ENCODE measurements at regions of chr14 and their contacts with region 1.

Region 1: GRCh38 chr14:39956372-39956771 is 524.1 kb upstream of the FBXO33 start:
- DNase-seq: no peak
- ATAC-seq: peak; percentile 50
- H3K4me3 ChIP-seq: no peak overlapping the region
- H3K27ac ChIP-seq: no peak overlapping the region
- H3K4me1 ChIP-seq: no peaks in the 10 kb centered on the region
- H3K27me3 ChIP-seq: no peaks in the 10 kb centered on the region
- CTCF ChIP-seq: peak in 2 of 3 experiments; percentile 23 to 36; a peak in 2 of 6 replicates
- EP300 ChIP-seq: no peak
- POLR2A ChIP-seq: no peak
- RAD21 ChIP-seq: peak; percentile 42

Region 2: GRCh38 chr14:39581474-39581873 is 374.9 kb before region 1 on chr14:
- CTCF ChIA-PET with region 1: interaction called, 6 read pairs
- POLR2A ChIA-PET with region 1: no interaction called
- RAD21 ChIA-PET with region 1: interaction called, 4 read pairs
- SMC1A ChIA-PET with region 1: interaction called, 3 read pairs
- in situ Hi-C with region 1: no loop called
- intact Hi-C with region 1: loop called (anchors 10 kb)
- DNase-seq: no peak
- ATAC-seq: peak; percentile 22; the same call in 1 of the 3 replicates
- H3K4me3 ChIP-seq: no peak overlapping the region
- H3K27ac ChIP-seq: no peak overlapping the region
- H3K4me1 ChIP-seq: no peaks in the 10 kb centered on the region
- H3K27me3 ChIP-seq: no peaks in the 10 kb centered on the region
- CTCF ChIP-seq: no peak; a peak in 1 of 6 replicates
- EP300 ChIP-seq: no peak
- POLR2A ChIP-seq: no peak
- RAD21 ChIP-seq: peak; percentile 47

Region 3: GRCh38 chr14:39861229-39861600 is 95.2 kb before region 1 on chr14:
- CTCF ChIA-PET with region 1: no interaction called
- POLR2A ChIA-PET with region 1: no interaction called
- RAD21 ChIA-PET with region 1: no interaction called
- SMC1A ChIA-PET with region 1: no interaction called
- in situ Hi-C with region 1: no loop called
- intact Hi-C with region 1: no loop called
- DNase-seq: no peak
- ATAC-seq: no peak
- H3K4me3 ChIP-seq: no peak overlapping the region
- H3K27ac ChIP-seq: no peak overlapping the region
- H3K4me1 ChIP-seq: no peaks in the 10 kb centered on the region
- H3K27me3 ChIP-seq: no peaks in the 10 kb centered on the region
- CTCF ChIP-seq: no peak
- EP300 ChIP-seq: no peak
- POLR2A ChIP-seq: no peak
- RAD21 ChIP-seq: no peak

Region 4: DNA sequence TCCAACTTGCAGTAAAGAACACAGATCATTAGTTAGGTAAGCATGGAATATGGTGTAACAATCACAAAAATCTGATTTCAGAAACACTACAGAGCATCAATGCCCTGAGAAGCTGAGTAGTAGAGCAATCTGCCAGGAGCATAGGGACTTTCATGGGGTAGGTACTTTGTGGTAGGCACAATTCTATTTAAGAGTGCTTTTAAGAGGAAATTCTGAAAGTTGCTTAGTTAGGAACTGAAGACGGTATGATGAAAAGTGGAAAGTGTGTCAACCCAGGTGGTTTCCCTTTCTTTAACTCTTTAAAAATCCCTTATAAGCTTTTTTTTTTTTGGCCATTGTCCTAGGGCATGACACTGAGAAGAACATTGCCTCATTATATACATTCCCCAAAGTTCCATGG is 11.5 kb after region 1 on chr14:
- CTCF ChIA-PET with region 1: interaction called, 38 read pairs
- POLR2A ChIA-PET with region 1: no interaction called
- RAD21 ChIA-PET with region 1: interaction called, 32 read pairs
- SMC1A ChIA-PET with region 1: interaction called, 44 read pairs
- in situ Hi-C with region 1: no loop called
- intact Hi-C with region 1: no loop called
- DNase-seq: no peak
- ATAC-seq: peak; percentile 68
- H3K4me3 ChIP-seq: no peak overlapping the region
- H3K27ac ChIP-seq: no peak overlapping the region
- H3K4me1 ChIP-seq: no peaks in the 10 kb centered on the region
- H3K27me3 ChIP-seq: no peaks in the 10 kb centered on the region
- CTCF ChIP-seq: no peak
- EP300 ChIP-seq: no peak
- POLR2A ChIP-seq: no peak
- RAD21 ChIP-seq: no peak

Region 5: GRCh38 chr14:39974036-39974435 is 17.7 kb after region 1 on chr14:
- CTCF ChIA-PET with region 1: interaction called, 38 read pairs
- POLR2A ChIA-PET with region 1: no interaction called
- RAD21 ChIA-PET with region 1: interaction called, 32 read pairs
- SMC1A ChIA-PET with region 1: interaction called, 44 read pairs
- in situ Hi-C with region 1: no loop called
- intact Hi-C with region 1: no loop called
- DNase-seq: peak; percentile 76
- ATAC-seq: peak; percentile 98
- H3K4me3 ChIP-seq: no peak overlapping the region
- H3K27ac ChIP-seq: no peak overlapping the region
- H3K4me1 ChIP-seq: no peaks in the 10 kb centered on the region
- H3K27me3 ChIP-seq: no peaks in the 10 kb centered on the region
- CTCF ChIP-seq: no peak
- EP300 ChIP-seq: peak; percentile 92 to 96
- POLR2A ChIP-seq: no peak
- RAD21 ChIP-seq: no peak

Region 6: DNA sequence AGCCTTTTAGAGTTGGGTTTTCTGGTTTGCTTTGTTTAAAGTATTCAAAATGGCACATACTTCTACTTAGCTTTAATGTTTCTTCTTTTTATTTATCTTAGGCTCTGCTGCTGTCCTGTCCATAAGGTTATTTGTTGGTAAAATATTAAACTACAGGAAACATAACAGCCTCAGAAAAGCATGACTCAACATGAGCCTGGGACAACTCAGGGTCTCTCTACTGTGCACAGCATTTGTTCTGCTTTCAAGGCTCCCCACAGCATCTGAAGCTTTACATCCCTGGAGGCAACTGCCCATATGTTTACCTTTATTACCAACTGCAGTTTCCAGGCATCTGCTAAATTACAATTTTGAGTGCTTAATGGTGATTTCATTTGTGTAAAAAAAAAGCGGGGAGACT is 430.1 kb after region 1 on chr14:
- CTCF ChIA-PET with region 1: no interaction called
- POLR2A ChIA-PET with region 1: no interaction called
- RAD21 ChIA-PET with region 1: no interaction called
- SMC1A ChIA-PET with region 1: no interaction called
- in situ Hi-C with region 1: no loop called
- intact Hi-C with region 1: loop called (anchors 10 kb)
- DNase-seq: no peak
- ATAC-seq: peak; percentile 48; the same call in 1 of the 3 replicates
- H3K4me3 ChIP-seq: no peak overlapping the region
- H3K27ac ChIP-seq: no peak overlapping the region
- H3K4me1 ChIP-seq: no peaks in the 10 kb centered on the region
- H3K27me3 ChIP-seq: no peaks in the 10 kb centered on the region
- CTCF ChIP-seq: no peak
- EP300 ChIP-seq: no peak
- POLR2A ChIP-seq: no peak
- RAD21 ChIP-seq: no peak